ENCODE measurements at regions of chr2 and their contacts with region 1.

Region 1: DNA sequence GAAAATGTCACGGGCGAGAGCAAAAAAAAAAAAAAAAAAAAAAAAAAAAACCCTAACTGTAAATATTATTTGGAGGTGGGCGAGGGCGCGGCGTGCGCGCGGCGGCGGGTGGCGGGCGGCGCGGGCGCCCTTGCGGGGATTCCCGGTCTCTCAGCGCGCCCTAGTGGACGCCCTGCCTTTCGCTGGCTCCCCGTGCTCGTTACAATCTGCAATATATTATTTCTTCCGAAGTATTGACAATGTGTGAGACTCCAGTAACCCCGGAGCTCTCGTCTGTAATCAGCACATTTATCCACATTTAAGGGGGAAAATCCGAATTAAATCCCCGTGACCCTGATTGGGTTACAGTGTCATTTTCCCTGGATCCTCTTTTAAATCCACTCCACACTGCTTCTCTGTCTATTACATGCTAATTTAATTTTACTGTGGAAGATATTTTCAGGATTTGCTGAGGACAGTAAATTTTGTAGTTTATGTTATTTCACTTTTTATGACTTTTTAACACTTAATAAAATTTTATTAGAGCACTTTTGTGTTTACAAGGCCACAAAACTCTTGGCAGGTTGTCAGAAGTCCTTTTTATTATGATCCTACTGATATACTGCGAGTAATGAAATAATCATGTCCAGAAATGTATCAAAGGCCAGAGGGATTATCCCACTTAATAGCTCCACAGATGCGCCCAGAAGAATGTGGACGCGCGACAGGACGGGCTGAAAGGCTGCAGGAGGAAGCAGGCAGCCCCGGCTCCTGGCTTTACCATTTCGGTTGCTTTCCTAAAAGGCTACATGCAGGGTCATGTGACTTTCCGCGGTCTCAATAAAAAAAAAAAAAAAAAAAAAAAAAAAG is 369.1 kb downstream of the MTX2 start:
- DNase-seq: peak; percentile 28
- H3K4me3 Mint-ChIP-seq: peak overlapping the region; percentile 58
- H3K27ac Mint-ChIP-seq: no peak overlapping the region
- H3K4me1 Mint-ChIP-seq: peaks cover 6% of the 10 kb centered on the region
- H3K27me3 Mint-ChIP-seq: peaks cover 72% of the 10 kb centered on the region

Region 2: GRCh38 chr2:175690113-175690837 is 948.1 kb before region 1 on chr2:
- intact Hi-C with region 1: loop called (anchors 10 kb)
- DNase-seq: peak; percentile 9
- H3K4me3 Mint-ChIP-seq: no peak overlapping the region
- H3K27ac Mint-ChIP-seq: no peak overlapping the region
- H3K4me1 Mint-ChIP-seq: no peaks in the 10 kb centered on the region
- H3K27me3 Mint-ChIP-seq: peaks cover 7% of the 10 kb centered on the region

Region 3: GRCh38 chr2:176126929-176127773 is 511.2 kb before region 1 on chr2:
- intact Hi-C with region 1: loop called (anchors 1 kb)
- DNase-seq: peak; percentile 24
- H3K4me3 Mint-ChIP-seq: no peak overlapping the region
- H3K27ac Mint-ChIP-seq: peak overlapping the region; percentile 23
- H3K4me1 Mint-ChIP-seq: peaks cover 31% of the 10 kb centered on the region
- H3K27me3 Mint-ChIP-seq: peaks cover 76% of the 10 kb centered on the region

Region 4: DNA sequence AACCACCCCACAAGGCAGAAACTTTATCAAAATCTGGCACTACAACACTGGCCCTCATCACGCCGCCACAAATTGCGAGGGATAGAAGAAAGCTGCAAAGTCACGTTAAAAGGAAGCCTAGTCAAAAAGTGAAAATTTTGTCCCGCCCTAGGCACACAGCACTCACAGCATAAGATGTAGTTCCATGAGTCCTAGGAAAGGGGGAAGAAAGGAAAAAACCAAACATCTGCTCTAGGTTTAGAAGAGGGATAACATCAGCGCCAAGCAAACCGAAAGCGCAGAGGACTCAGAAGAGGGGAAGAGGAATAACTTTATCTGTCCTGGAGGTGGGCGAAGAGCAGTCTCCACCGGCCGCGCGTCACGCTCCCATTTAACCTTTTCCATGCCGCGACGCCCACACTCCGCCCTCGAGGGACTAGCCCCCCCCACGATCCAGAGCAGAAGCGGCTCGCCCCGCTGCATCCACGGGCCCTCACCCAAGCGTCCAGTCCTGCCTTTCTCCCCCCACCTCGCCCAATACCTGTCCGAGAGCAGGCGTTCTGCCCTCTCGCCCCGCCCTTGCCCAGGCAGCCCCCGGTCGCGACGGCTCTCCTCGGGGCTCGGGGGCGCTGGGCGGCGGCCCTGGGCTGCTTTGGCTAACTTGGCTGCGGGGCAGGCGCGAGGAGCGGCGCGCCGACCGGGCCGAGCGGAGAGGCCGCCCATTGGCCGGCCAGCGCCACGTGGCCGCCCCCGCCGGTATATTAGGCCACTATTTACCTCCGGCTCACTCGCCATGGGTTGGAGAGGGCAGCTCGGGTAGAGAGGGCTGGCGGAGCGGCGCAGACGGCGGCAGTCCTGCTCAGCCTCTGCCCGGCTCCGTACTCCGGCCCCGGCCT is 450.3 kb before region 1 on chr2 and contains the start of gene HOXD1:
- intact Hi-C with region 1: loop called (anchors 5 kb)
- DNase-seq: no peak
- H3K4me3 Mint-ChIP-seq: peak within 1 kb of the TSS; percentile 86
- H3K27ac Mint-ChIP-seq: peak within 1 kb of the TSS; percentile 57
- H3K4me1 Mint-ChIP-seq: peaks cover 13% of the 10 kb centered on the region
- H3K27me3 Mint-ChIP-seq: peaks cover 76% of the 10 kb centered on the region
- total RNA-seq, gene HOXD1: not detected in 2 replicates

Region 5: DNA sequence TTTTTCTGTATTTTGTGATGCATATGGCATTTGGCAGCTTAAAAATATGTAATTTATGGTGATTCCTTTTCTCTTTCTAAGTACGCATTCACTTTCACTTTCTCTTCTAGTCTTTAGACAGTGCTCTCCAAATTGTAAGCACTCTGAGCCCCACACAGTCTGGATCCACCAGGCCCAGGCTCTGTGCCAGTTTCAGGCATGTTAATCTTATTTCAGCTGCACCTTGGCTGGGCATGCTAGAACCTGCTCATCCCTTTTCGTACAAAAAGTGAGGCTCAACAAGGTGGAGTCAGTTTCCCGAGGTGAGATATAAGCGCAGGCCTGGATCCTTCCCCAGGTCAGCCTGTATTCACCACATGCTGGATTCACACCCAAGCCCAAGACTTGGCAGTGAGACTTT is 165.2 kb before region 1 on chr2:
- intact Hi-C with region 1: no loop called
- DNase-seq: no peak
- H3K4me3 Mint-ChIP-seq: no peak overlapping the region
- H3K27ac Mint-ChIP-seq: no peak overlapping the region
- H3K4me1 Mint-ChIP-seq: peaks cover 12% of the 10 kb centered on the region
- H3K27me3 Mint-ChIP-seq: peaks cover 17% of the 10 kb centered on the region

Region 6: GRCh38 chr2:176554101-176555048 is 84.0 kb before region 1 on chr2:
- intact Hi-C with region 1: loop called (anchors 5 kb)
- DNase-seq: no peak
- H3K4me3 Mint-ChIP-seq: peak overlapping the region; percentile 72
- H3K27ac Mint-ChIP-seq: no peak overlapping the region
- H3K4me1 Mint-ChIP-seq: peaks cover 14% of the 10 kb centered on the region
- H3K27me3 Mint-ChIP-seq: peaks cover 30% of the 10 kb centered on the region

Region 7: DNA sequence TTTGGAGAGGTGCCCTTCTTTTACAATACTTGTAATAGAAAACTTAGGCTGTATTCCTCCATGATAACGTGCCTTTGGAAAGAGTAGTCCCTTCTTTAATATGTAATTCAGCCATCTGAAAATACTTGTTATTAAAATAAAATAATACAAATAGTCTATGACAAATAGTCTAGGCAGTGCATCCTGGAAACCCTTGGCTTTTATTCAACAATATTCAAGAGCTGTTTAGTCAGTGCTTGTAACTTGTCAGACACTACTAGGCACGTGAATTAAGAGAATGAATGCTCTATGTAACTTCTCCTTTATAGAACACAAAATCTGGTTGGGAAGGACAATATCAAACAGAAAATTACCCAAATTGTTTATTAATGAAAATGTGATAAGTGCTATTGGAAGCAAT is 19.0 kb after region 1 on chr2:
- intact Hi-C with region 1: no loop called
- DNase-seq: no peak
- H3K4me3 Mint-ChIP-seq: no peak overlapping the region
- H3K27ac Mint-ChIP-seq: no peak overlapping the region
- H3K4me1 Mint-ChIP-seq: peaks cover 15% of the 10 kb centered on the region
- H3K27me3 Mint-ChIP-seq: peaks cover 35% of the 10 kb centered on the region

Region 8: GRCh38 chr2:176814306-176815052 is 176.1 kb after region 1 on chr2:
- intact Hi-C with region 1: no loop called
- DNase-seq: no peak
- H3K4me3 Mint-ChIP-seq: no peak overlapping the region
- H3K27ac Mint-ChIP-seq: no peak overlapping the region
- H3K4me1 Mint-ChIP-seq: peaks cover 5% of the 10 kb centered on the region
- H3K27me3 Mint-ChIP-seq: peaks cover 2% of the 10 kb centered on the region

Measured in activated T-helper 1 cell treated with anti-CD3 and anti-CD28 coated beads, Interleukin-12 subunit alpha, Interleukin-12 subunit beta, Interleukin-2, Interleukin-4 antibody, amounts not matched to agents 30 ng/mL and 10 ng/mL and 1 ng/mL, durations not matched to agents 14 hours and 24 hours and 36 hours (primary cell).